ENCODE measurements at regions of chr2 and their contacts with region 1.

Region 1: GRCh38 chr2:127293748-127294562 is at the start of gene ERCC3:
- DNase-seq: peak; percentile 80
- ATAC-seq: peak; percentile 96
- H3K4me3 ChIP-seq: peak within 1 kb of the TSS; percentile 89
- H3K27ac ChIP-seq: peak within 1 kb of the TSS; percentile 94
- H3K4me1 ChIP-seq: peaks cover 6% of the 10 kb centered on the region
- H3K27me3 ChIP-seq: no peaks in the 10 kb centered on the region
- CTCF ChIP-seq: no peak
- POLR2A ChIP-seq: peak; percentile 71
- RAD21 ChIP-seq: no peak
- total RNA-seq, gene ERCC3: 40.0 and 43.2 TPM in 2 replicates

Region 2: DNA sequence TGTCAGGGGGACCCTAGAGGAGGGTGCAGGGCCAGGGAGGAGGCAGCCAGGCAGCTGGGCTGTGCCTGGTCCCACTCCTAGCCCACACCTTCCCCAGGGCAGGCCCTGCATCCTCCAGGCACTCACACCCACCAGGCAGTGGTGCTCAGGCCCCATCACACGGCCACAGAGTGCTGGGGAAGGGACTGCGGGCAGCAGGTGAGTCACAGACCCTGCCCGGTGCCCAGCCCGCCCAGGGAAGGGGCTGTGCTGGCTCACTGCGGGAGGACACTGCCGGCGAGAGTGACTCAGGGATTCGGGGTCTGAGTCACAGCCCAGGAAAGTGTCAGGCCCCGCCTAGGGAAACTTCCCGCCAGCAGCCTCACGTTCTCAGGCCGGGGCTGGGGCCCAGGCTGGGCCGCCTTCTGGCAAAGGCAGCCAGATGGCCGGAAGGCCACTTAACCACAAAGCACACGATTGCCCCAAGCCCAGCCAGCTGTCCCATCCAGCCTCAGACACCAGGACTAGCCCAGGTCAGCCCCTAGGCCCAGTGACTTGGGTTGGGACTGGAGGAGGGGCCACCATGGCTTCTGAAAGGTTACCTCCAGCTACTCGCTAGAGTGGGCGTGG is 229.2 kb before region 1 on chr2:
- CTCF ChIA-PET with region 1: no interaction called
- POLR2A ChIA-PET with region 1: no interaction called
- dilution Hi-C with region 1: no loop called
- in situ Hi-C with region 1: no loop called
- intact Hi-C with region 1: loop called (anchors 5 kb)
- DNase-seq: peak; percentile 97
- ATAC-seq: peak; percentile 93
- H3K4me3 ChIP-seq: no peak overlapping the region
- H3K27ac ChIP-seq: peak overlapping the region; percentile 78
- H3K4me1 ChIP-seq: peaks cover 16% of the 10 kb centered on the region
- H3K27me3 ChIP-seq: no peaks in the 10 kb centered on the region
- CTCF ChIP-seq: peak; percentile 60
- POLR2A ChIP-seq: peak; percentile 62
- RAD21 ChIP-seq: peak; percentile 73

Region 3: DNA sequence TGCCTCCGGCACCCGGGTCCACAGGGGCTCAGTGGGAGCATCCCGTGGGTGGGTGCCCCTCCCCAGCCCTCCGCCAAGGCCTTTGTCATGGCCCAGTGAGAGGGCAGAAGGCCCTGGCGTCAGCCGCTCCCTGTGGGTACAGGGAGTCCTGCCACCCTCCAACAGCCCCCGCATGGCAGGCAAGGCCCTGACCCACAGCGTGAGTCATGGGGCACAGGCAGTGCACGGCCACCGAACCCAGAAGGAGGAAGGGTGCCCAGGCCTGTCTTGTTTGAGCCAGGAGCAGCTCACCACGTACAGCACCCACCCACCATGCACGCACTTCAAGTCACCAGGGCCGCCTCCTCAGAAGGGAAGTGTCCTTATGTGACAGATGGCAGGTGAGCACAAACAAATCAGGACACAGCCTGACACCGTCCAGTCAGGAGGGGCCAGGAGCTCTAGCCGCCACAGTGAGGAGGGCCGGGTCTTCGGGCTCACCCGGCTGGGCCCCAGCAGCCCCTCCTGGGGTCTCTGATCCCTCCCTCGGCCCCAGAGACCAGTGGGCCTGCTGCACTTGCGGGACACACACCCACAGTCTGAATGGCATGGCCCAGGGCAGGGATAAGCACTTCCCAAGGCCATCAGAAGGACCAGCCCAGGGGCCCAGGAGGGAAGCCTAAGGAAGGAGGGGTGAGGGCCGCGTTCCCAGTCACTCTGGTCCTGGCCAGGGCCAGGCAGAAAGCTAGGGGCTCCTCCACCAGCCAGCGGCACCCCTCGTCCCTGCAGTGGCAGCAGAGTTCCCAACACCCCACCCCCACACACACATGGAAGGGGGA is 212.8 kb before region 1 on chr2:
- CTCF ChIA-PET with region 1: no interaction called
- POLR2A ChIA-PET with region 1: no interaction called
- dilution Hi-C with region 1: no loop called
- in situ Hi-C with region 1: no loop called
- intact Hi-C with region 1: loop called (anchors 5 kb)
- DNase-seq: no peak
- ATAC-seq: no peak
- H3K4me3 ChIP-seq: no peak overlapping the region
- H3K27ac ChIP-seq: no peak overlapping the region
- H3K4me1 ChIP-seq: peaks cover 49% of the 10 kb centered on the region
- H3K27me3 ChIP-seq: no peaks in the 10 kb centered on the region
- CTCF ChIP-seq: no peak
- POLR2A ChIP-seq: no peak
- RAD21 ChIP-seq: no peak

Region 4: GRCh38 chr2:127280693-127281092 is 13.3 kb before region 1 on chr2:
- CTCF ChIA-PET with region 1: no interaction called
- POLR2A ChIA-PET with region 1: interaction called, 3 read pairs
- dilution Hi-C with region 1: no loop called
- in situ Hi-C with region 1: no loop called
- intact Hi-C with region 1: loop called (anchors 1 kb)
- DNase-seq: no peak
- ATAC-seq: no peak
- H3K4me3 ChIP-seq: no peak overlapping the region
- H3K27ac ChIP-seq: no peak overlapping the region
- H3K4me1 ChIP-seq: no peaks in the 10 kb centered on the region
- H3K27me3 ChIP-seq: no peaks in the 10 kb centered on the region
- CTCF ChIP-seq: no peak
- POLR2A ChIP-seq: no peak
- RAD21 ChIP-seq: no peak

Region 5: DNA sequence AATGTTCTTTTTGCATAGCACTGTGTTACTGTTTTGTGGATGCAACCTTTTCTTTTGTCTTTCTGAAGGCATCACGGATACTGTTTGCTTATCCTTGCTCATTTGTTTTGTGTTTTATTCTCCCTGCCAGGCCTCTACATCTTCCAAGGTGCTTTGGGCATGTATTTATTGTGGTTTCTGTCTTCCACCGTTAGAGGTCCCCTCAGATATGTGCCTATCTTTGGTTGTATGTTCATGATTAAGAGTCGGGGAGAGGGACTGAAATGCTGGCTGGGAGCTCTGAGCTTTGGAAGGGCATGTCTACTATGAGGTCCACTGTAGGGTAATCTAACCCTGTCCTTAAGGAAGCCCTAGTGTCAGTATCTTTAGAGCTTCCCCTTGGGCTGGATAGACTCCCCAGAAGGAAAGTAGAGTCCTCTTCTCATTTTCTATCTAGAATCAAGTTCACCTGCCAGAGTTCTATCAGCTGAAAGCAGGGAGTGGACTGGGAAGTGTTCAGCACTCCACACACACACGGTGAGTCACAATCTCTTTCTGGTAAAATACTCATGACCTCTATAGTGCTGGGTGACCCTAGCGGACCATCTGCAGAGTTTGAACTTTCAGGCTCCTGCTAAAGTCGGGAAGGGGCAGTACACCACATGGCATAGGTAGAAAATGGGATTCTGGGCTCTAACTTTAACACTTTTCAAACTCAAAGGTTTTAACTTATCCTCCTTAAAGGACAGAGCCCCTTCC is 690.4 kb after region 1 on chr2:
- CTCF ChIA-PET with region 1: no interaction called
- POLR2A ChIA-PET with region 1: no interaction called
- dilution Hi-C with region 1: no loop called
- in situ Hi-C with region 1: loop called (anchors 25 kb)
- intact Hi-C with region 1: no loop called
- DNase-seq: peak; percentile 60
- ATAC-seq: no peak
- H3K4me3 ChIP-seq: no peak overlapping the region
- H3K27ac ChIP-seq: no peak overlapping the region
- H3K4me1 ChIP-seq: no peaks in the 10 kb centered on the region; the same call in 1 of the 2 replicates
- H3K27me3 ChIP-seq: no peaks in the 10 kb centered on the region
- CTCF ChIP-seq: no peak
- POLR2A ChIP-seq: no peak
- RAD21 ChIP-seq: no peak